ENCODE measurements at regions of chr2 and their contacts with region 1.

Region 1: GRCh38 chr2:68943581-68944568 is 8.8 kb downstream of the GKN2 start:
- DNase-seq: no peak
- H3K4me3 ChIP-seq: no peak overlapping the region
- H3K27ac ChIP-seq: no peak overlapping the region
- H3K27me3 ChIP-seq: no peaks in the 10 kb centered on the region
- CTCF ChIP-seq: peak; percentile 93

Region 2: DNA sequence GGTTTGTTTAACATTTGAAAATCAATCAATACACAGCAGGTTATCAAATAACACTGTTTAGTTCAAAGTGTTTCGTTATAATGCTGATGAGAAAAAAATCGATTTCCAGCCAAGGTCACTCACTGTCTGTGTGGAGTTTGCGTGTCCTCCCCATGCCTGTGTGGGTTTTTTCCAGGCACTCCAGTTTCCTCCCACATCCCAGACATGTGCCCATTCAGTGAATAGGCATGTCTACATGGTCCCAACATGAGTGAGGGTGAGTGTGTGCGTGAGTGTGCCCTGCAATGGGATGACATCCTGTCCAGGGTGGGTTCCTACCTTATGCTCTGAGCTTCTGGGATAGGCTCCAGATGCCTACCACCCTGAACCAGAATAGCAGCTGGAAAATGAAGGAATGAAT is 17.5 kb after region 1 on chr2:
- CTCF ChIA-PET with region 1: interaction called, 23 read pairs
- POLR2A ChIA-PET with region 1: no interaction called
- DNase-seq: no peak
- H3K4me3 ChIP-seq: no peak overlapping the region
- H3K27ac ChIP-seq: no peak overlapping the region
- H3K27me3 ChIP-seq: no peaks in the 10 kb centered on the region
- CTCF ChIP-seq: no peak

Region 3: DNA sequence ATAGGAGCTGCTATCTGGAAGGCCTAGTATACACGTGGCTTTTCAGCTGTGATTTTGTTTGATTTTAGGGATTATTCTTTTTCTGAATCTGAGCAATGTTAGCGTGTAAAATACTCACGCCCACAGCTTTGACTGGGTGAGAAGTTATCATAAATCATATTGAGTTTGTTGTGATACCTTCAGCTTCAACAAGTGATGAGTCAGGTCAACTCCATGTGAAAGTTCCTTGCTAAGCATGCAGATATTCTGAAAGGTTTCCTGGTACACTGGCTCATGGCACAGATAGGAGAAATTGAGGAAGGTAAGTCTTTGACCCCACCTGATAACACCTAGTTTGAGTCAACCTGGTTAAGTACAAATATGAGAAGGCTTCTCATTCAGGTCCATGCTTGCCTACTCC is 30.4 kb after region 1 on chr2 and contains the start of gene GKN1:
- CTCF ChIA-PET with region 1: interaction called, 10 read pairs
- POLR2A ChIA-PET with region 1: no interaction called
- DNase-seq: peak; percentile 15
- H3K4me3 ChIP-seq: no peak within 1 kb of the TSS
- H3K27ac ChIP-seq: no peak within 1 kb of the TSS
- H3K27me3 ChIP-seq: no peaks in the 10 kb centered on the region
- CTCF ChIP-seq: no peak
- polyA plus RNA-seq, gene GKN1: not detected in 2 replicates

Region 4: DNA sequence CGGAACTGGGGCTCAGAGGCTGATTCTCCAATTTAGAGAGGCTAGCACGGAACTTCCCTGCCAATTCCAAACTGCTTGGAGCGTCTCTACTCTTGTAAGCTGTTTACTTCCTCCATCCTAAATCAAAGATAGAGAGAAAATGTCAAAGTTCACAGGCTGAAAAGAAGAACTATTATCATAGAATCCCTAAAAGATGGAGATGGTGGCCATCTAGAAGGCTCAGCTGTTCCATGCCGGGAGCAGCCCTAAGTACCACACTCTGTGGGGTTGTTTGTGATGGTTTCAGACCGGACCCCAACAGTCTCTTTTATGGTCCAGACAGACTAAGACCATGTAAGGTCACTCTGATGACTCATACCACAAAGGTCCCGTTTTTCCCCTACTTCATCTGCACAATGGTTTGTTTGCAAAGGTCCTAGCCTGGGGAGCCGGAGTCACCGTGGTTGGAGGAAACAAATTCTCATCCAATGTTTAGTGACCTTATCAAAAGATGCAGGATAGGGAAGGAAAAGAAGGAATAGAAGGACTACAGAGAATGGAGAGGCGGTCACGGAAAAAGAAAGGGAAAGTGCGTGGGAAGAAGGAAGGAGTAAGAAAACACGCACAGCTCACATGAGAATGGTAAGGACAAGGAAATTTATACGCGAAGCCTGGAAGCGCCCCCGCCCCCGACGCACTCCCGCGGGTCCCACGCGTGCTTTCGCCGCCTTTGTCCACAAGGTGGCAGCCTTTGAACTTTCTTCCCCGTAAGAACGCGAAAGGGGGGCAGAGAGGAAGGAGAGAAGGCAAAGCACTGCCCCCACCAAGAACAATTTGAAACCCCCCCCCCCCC is 68.7 kb after region 1 on chr2:
- CTCF ChIA-PET with region 1: interaction called, 15 read pairs
- POLR2A ChIA-PET with region 1: no interaction called
- DNase-seq: peak; percentile 44
- H3K4me3 ChIP-seq: peak overlapping the region; percentile 90
- H3K27ac ChIP-seq: peak overlapping the region; percentile 76
- H3K27me3 ChIP-seq: no peaks in the 10 kb centered on the region
- CTCF ChIP-seq: peak; percentile 78

Region 5: GRCh38 chr2:69188182-69188900 is 244.5 kb after region 1 on chr2:
- CTCF ChIA-PET with region 1: interaction called, 10 read pairs
- POLR2A ChIA-PET with region 1: no interaction called
- DNase-seq: no peak
- H3K4me3 ChIP-seq: no peak overlapping the region
- H3K27ac ChIP-seq: no peak overlapping the region
- H3K27me3 ChIP-seq: no peaks in the 10 kb centered on the region
- CTCF ChIP-seq: no peak

Region 6: GRCh38 chr2:69375494-69376353 is 431.8 kb after region 1 on chr2:
- CTCF ChIA-PET with region 1: no interaction called
- POLR2A ChIA-PET with region 1: no interaction called
- DNase-seq: no peak
- H3K4me3 ChIP-seq: no peak overlapping the region
- H3K27ac ChIP-seq: no peak overlapping the region
- H3K27me3 ChIP-seq: no peaks in the 10 kb centered on the region
- CTCF ChIP-seq: peak; percentile 55

Measured in AG04450 (cell line).